ENCODE measurements at regions of chr15 and their contacts with region 1.

Region 1: DNA sequence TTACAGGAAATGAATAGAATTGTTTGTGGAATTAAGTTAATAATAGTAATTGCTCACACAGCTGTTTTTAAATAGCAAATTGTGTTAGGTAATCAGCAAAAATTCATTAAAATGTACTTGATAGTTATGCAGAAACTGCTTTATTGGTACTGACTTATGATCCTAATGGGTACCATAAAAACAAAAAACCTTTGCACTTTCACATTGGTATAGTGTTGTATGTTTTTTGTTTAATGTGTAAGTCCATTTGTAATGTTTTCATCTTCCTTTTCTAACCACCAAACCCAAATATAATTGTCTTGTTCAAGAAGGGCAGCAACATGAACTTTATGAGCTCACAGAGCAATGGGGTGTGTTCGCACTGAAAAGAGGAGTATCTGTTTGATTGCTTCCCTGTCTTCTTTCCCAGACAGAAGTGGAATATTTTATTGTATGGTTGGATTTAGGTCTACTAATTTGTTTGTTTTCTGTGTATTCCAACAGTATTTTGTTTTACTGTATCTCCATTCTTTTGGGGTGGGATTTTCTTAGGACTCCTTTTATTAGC is 135.8 kb downstream of the TCF12 start:
- DNase-seq: no peak
- ATAC-seq: no peak
- H3K4me3 ChIP-seq: no peak overlapping the region
- H3K27ac ChIP-seq: no peak overlapping the region
- H3K4me1 ChIP-seq: no peaks in the 10 kb centered on the region; the same call in 1 of the 2 replicates
- H3K27me3 ChIP-seq: no peaks in the 10 kb centered on the region
- CTCF ChIP-seq: no peak

Region 2: GRCh38 chr15:56906771-56907170 is 147.5 kb before region 1 on chr15:
- CTCF ChIA-PET with region 1: no interaction called
- POLR2A ChIA-PET with region 1: interaction called, 10 read pairs
- in situ Hi-C with region 1: no loop called
- intact Hi-C with region 1: no loop called
- DNase-seq: no peak
- ATAC-seq: no peak
- H3K4me3 ChIP-seq: no peak overlapping the region
- H3K27ac ChIP-seq: no peak overlapping the region
- H3K4me1 ChIP-seq: no peaks in the 10 kb centered on the region
- H3K27me3 ChIP-seq: no peaks in the 10 kb centered on the region
- CTCF ChIP-seq: no peak

Region 3: GRCh38 chr15:57079931-57080620 is 25.8 kb after region 1 on chr15:
- CTCF ChIA-PET with region 1: no interaction called
- POLR2A ChIA-PET with region 1: interaction called, 10 read pairs
- in situ Hi-C with region 1: no loop called
- intact Hi-C with region 1: no loop called
- DNase-seq: no peak
- ATAC-seq: no peak
- H3K4me3 ChIP-seq: no peak overlapping the region
- H3K27ac ChIP-seq: no peak overlapping the region
- H3K4me1 ChIP-seq: peaks cover 8% of the 10 kb centered on the region; the same call in 1 of the 2 replicates
- H3K27me3 ChIP-seq: no peaks in the 10 kb centered on the region
- CTCF ChIP-seq: 0 out of 2 replicates have a peak, but pooled peaks have one; percentile 16